ENCODE measurements at regions of chr1 and their contacts with region 1.

Region 1: GRCh38 chr1:96544831-96545221 is 176.8 kb upstream of the PTBP2 start:
- DNase-seq: no peak
- H3K4me3 ChIP-seq: no peak overlapping the region
- H3K27ac ChIP-seq: no peak overlapping the region
- H3K27me3 ChIP-seq: no peaks in the 10 kb centered on the region
- CTCF ChIP-seq: no peak

Region 2: DNA sequence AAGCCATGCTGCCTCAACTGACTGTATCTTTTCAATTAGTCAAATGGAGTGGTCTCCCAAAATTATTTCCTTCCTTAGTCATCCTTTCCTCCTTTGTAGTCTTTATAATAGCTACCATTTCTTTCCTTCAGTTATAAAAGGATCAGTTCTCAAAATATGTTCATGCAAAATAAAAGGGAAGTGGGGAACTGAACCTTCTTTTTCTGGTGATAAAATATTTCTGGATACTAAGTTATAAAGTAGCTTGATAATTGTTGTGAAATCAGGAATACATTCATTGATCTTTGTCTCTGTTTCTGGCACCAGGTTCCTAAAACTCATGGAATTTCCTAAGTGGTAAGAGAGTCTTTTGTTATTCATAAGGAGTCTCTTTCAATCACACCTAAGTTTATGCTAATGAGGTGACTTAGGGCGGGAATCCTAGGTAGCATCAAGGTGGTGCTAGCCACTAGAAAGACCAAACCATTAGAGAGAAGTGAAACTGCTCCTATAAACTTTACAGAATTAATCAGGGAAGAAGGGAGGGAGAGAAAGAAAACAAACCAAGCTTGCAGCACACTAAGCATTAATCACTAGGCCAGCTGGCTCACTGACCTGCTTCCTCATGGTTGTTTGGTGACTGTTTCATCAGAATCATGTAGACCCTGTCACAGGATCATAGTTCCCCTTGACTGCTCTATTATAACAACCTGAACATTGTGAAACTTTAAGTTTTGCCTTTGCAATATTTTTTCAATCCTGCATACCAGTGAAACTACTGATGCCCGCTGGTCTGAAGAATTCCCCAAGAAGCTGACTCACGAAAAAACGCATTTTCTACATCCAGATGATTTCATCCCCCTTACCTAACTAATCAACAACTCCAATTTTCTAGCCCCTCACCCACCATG is 15.1 kb after region 1 on chr1:
- intact Hi-C with region 1: no loop called
- DNase-seq: no peak
- H3K4me3 ChIP-seq: peak overlapping the region in 20 of 59 donors; percentile 4 to 43 (median 24)
- H3K27ac ChIP-seq: peak overlapping the region in 7 of 59 donors; percentile 1 to 43 (median 12)
- H3K27me3 ChIP-seq: no peaks in the 10 kb centered on the region
- CTCF ChIP-seq: no peak

Region 3: DNA sequence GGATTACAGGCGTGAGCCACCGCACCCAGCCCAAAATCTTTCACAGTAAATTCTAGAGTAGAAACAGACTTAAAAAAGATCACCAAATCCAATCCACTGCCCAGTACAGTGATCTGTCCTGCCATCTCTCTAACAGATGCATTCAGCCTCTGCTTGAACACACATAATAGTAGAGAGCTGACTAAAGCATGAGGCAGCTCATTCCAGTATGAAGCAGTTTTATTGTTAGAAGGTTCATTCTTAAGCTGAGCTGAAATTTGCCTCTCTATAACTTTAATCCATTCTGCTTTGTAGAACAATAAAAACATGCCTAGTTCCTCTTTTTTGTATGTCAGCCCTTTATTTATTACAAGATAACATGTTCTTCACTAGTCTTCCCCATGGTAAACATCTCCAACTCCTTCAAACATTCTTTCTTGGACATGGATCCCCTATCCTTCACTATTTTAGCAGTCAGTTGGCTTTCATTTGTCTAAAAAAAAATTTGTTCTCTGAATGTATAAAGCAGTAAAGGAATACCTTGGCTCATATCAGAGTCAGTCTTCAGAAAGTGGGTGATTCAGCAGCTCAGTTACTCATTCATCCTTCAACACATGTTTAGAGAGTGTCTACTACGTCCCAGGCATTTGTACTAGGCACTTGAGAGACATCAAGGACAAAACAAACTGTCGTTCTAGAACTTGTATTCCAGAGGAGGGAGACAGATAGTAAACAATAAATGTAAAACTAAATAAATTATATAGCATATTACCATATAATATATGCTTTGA is 166.1 kb after region 1 on chr1:
- intact Hi-C with region 1: loop called in 1 of 2 experiments (anchors 10 kb)
- DNase-seq: no peak
- H3K4me3 ChIP-seq: no peak overlapping the region
- H3K27ac ChIP-seq: peak overlapping the region in 5 of 59 donors; percentile 5 to 23 (median 17)
- H3K27me3 ChIP-seq: no peaks in the 10 kb centered on the region
- CTCF ChIP-seq: no peak